ENCODE measurements at regions of chr16 and their contacts with region 1.

Region 1: DNA sequence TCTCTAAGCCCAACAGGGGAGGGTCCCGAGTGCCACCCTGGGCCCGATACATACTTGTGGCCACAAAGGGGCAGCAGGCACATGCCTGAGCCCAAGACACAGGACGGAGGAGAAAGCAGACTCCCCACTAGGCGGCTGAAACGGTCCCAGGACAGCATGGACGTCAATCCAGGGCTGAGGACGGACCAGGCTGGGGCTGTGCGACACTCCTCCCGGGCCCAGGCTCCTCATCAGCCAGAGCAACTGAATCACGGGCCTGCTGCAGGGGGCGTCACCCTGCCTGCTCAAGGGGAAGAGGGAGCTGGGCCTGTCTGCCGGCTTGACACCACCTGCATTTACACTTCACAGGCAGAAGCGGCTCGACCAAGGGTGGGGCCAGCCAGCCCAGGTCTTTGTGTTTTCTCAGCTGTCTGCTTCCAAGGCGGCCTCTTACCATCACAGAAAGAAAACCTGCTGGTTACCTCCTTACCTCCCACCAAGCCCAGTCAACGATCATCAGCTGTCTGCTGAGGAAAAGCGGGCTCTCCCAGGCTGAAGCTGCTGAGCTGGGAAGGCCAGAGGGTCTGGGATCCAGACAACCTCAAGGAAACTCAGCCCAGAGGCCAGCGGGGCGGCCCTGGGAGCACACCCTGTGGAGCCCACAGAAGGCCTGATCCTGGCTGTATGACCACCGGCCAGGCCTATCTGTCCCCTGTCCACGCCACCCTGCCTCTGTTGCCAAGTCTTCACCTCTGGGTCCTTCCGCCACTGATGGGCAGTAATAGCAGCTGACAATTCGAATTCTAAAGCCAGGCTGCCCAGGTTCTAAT is 26.4 kb downstream of the KIFC3 start:
- DNase-seq: peak; percentile 92
- ATAC-seq: peak; percentile 96
- H3K4me3 Mint-ChIP-seq: peak overlapping the region; percentile 35
- H3K27ac Mint-ChIP-seq: peak overlapping the region; percentile 91
- H3K4me1 Mint-ChIP-seq: peaks cover 33% of the 10 kb centered on the region
- H3K27me3 Mint-ChIP-seq: peaks cover 3% of the 10 kb centered on the region; the same call in 1 of the 2 replicates
- CTCF ChIP-seq: peak; percentile 24; the same call in 1 of the 2 replicates

Region 2: DNA sequence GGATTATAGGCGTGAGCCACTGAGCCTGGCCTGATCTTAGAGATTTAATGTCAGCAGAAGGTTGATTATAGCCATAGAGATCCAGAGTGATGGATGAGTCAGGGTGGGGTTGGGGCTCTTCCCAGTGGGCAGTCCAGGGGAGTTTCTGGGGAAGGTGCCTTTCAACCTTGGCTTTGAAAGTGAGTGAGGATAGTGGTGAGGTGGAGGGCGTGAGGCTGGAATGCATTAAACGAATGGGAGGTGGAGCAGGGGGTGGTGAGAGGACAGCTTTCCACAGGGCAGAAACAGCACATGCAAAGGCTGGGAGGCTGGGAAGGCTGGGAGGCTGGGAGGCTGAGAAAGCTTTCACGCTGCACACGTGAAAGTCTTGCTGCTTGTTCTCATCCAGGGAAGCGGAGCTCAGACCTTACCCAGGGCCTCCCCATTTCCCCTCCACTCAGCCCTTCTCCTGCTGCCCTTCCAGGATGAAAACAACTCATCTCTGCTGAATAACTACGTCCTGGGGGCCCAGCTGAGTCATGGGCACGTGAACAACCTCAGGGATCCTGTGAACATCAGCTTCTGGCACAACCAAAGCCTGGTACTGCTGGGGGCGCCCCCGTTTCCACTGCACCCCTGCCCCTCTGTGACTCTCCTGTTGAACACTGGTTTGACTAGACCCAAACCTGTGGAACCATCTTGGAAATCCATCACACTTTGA is 211.1 kb before region 1 on chr16:
- CTCF ChIA-PET with region 1: no interaction called
- POLR2A ChIA-PET with region 1: no interaction called
- DNase-seq: no peak
- ATAC-seq: no peak
- H3K4me3 Mint-ChIP-seq: no peak overlapping the region
- H3K27ac Mint-ChIP-seq: no peak overlapping the region
- H3K4me1 Mint-ChIP-seq: no peaks in the 10 kb centered on the region
- H3K27me3 Mint-ChIP-seq: peaks cover 21% of the 10 kb centered on the region
- CTCF ChIP-seq: no peak

Region 3: DNA sequence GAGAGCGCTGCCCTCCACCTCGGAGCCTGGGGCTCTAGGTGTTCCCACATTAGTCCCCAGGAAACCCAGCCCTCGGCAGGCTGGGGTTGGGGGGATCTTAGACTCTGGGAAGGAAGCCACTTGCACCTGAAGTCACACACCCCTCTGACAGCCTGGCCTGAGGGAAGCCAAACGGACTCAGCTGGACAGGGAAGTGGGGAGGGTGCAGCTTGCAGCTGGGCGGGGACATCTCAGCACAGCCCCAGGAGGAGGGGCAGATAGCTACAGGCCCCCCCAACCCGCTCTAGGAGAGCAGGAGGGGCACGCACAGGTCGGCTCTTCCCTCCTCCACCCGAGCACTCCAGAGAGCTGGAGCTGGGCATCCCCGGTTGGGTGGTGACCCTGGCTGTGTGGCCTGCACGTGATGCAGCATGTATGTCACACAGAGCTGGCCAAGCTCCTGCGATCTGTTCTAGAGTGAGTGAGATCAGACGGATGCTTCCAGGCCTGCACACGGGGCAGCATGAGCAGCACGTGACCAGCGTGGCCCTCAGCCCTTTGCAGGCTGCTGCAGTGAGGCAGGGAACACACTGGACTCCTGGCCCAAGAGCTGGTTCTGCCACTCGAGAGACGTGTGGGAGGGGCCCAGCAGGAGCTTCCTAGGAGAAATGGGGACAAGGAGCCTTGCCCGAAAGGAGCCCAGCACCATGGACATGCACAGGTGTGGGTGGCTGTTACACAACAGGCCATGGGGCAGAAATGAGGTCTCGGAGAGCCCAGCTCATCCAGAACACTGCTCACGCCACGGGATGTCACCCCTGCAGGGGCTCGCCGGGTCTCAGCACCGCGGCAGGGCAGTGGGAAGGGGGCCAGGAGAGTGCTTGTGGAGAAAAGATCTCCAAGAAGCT is 11.0 kb after region 1 on chr16:
- CTCF ChIA-PET with region 1: interaction called, 16 read pairs
- POLR2A ChIA-PET with region 1: interaction called, 3 read pairs
- DNase-seq: no peak
- ATAC-seq: no peak
- H3K4me3 Mint-ChIP-seq: no peak overlapping the region
- H3K27ac Mint-ChIP-seq: no peak overlapping the region
- H3K4me1 Mint-ChIP-seq: peaks cover 6% of the 10 kb centered on the region; the same call in 1 of the 2 replicates
- H3K27me3 Mint-ChIP-seq: no peaks in the 10 kb centered on the region
- CTCF ChIP-seq: no peak

Region 4: GRCh38 chr16:57810197-57811031 is 34.5 kb after region 1 on chr16:
- CTCF ChIA-PET with region 1: interaction called, 22 read pairs
- POLR2A ChIA-PET with region 1: no interaction called
- DNase-seq: peak; percentile 47
- ATAC-seq: peak; percentile 59
- H3K4me3 Mint-ChIP-seq: no peak overlapping the region
- H3K27ac Mint-ChIP-seq: peak overlapping the region; percentile 87
- H3K4me1 Mint-ChIP-seq: peaks cover 57% of the 10 kb centered on the region
- H3K27me3 Mint-ChIP-seq: peaks cover 2% of the 10 kb centered on the region; the same call in 1 of the 2 replicates
- CTCF ChIP-seq: no peak

Region 5: DNA sequence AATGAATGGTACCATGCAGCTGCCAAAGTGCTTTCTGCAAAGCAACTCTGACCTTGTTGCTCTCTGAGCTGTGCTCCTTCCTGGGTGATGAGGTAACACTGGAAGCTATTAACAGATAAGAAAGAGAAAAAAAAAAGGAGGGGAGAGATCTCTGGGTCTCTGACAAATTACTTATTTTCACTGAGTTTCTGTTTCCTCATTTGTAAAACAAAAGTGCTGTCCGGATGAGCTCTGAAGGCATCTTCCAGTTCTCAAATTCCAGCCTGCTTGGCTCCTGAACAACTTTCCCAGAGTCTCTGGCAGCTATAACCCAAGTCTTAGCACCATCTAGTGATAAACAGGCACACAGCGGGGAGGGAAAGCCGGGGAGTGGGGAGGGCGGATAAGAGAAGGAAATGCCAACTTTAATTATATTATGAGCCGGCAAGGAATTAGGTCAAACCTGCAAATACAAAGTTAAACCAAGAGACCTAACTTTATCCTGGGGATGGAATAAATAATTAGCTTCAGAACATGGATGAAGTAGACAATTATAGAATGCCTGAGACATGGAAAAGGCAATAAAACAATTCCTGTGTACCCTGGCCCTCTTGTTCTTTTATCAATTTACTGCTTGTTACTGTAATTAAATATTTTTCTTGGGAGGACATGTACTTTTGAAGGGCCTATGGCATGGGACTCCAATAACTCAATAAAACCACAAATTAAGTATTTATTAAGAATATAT is 87.7 kb after region 1 on chr16:
- CTCF ChIA-PET with region 1: interaction called, 49 read pairs
- POLR2A ChIA-PET with region 1: no interaction called
- DNase-seq: peak; percentile 64
- ATAC-seq: peak; percentile 89
- H3K4me3 Mint-ChIP-seq: peak overlapping the region; percentile 24
- H3K27ac Mint-ChIP-seq: peak overlapping the region; percentile 88
- H3K4me1 Mint-ChIP-seq: peaks cover 45% of the 10 kb centered on the region
- H3K27me3 Mint-ChIP-seq: no peaks in the 10 kb centered on the region
- CTCF ChIP-seq: no peak

Region 6: GRCh38 chr16:57892447-57893096 is 116.7 kb after region 1 on chr16:
- CTCF ChIA-PET with region 1: interaction called, 11 read pairs
- POLR2A ChIA-PET with region 1: no interaction called
- DNase-seq: no peak
- ATAC-seq: no peak
- H3K4me3 Mint-ChIP-seq: no peak overlapping the region
- H3K27ac Mint-ChIP-seq: peak overlapping the region; percentile 14; the same call in 1 of the 2 replicates
- H3K4me1 Mint-ChIP-seq: peaks cover 31% of the 10 kb centered on the region
- H3K27me3 Mint-ChIP-seq: 0 out of 2 replicates have a peak, but pooled peaks cover 2% of the 10 kb centered on the region
- CTCF ChIP-seq: no peak

Measured in WTC11 (cell line).